ENCODE measurements at regions of chr5 and their contacts with region 1.

Region 1: GRCh38 chr5:173581408-173582215 is 34.8 kb downstream of the BOD1 start:
- DNase-seq: no peak
- H3K4me3 ChIP-seq: no peak overlapping the region
- CTCF ChIP-seq: peak; percentile 85

Region 2: GRCh38 chr5:173592050-173592669 is 10.5 kb after region 1 on chr5:
- CTCF ChIA-PET with region 1: interaction called, 52 read pairs
- POLR2A ChIA-PET with region 1: no interaction called
- DNase-seq: no peak
- H3K4me3 ChIP-seq: no peak overlapping the region
- CTCF ChIP-seq: peak; percentile 37